SK-N-SH (cell line): ENCODE measurements at regions of chr18 and their contacts with region 1.

Region 1: GRCh38 chr18:44579028-44579702 is 101.5 kb upstream of the SETBP1 start:
- DNase-seq: peak; percentile 53
- H3K4me3 ChIP-seq: no peak overlapping the region; a peak in 1 of 4 replicates
- H3K27ac ChIP-seq: peak overlapping the region in 1 of 2 experiments; percentile 14; a peak in 1 of 4 replicates
- H3K4me1 ChIP-seq: peaks cover 0 to 4% of the 10 kb centered on the region in 2 experiments; a peak in 2 of 4 replicates
- H3K27me3 ChIP-seq: no peaks in the 10 kb centered on the region
- CTCF ChIP-seq: peak; percentile 61
- EP300 ChIP-seq: no peak
- RAD21 ChIP-seq: peak; percentile 59

Region 2: DNA sequence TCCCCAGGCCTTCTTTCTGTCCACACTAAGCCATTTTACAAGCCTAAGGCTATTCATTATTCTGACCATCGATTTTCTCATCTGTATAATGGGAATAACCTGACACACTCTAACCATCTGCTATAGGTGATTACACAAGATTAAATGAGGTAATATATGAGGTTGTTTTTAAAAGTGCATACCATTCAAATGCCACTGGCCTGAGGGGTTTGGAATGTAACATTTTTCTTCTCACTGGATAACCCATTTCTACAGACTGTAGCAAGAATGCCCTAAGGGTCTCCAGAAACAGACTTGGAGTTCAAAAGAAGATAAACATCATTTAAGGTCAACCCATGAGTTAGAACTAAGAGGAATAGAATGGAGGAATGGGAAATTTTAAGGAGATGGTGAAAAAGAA is 10.2 kb before region 1 on chr18:
- CTCF ChIA-PET with region 1: interaction called, 10 read pairs
- POLR2A ChIA-PET with region 1: no interaction called
- DNase-seq: no peak
- H3K4me3 ChIP-seq: no peak overlapping the region
- H3K27ac ChIP-seq: no peak overlapping the region
- H3K4me1 ChIP-seq: no peaks in the 10 kb centered on the region
- H3K27me3 ChIP-seq: no peaks in the 10 kb centered on the region
- CTCF ChIP-seq: no peak
- EP300 ChIP-seq: no peak
- RAD21 ChIP-seq: no peak